Breast epithelium (tissue), 4 donors: ENCODE measurements at regions of chr5 and their contacts with region 1.

Region 1: GRCh38 chr5:156675395-156675794 is 174.7 kb upstream of the PPP1R2B start:
- DNase-seq: no peak
- H3K4me3 ChIP-seq: no peak overlapping the region
- H3K27ac ChIP-seq: no peak overlapping the region
- H3K4me1 ChIP-seq: no peaks in the 10 kb centered on the region
- H3K27me3 ChIP-seq: no peaks in the 10 kb centered on the region
- CTCF ChIP-seq: no peak
- POLR2A ChIP-seq: no peak

Region 2: DNA sequence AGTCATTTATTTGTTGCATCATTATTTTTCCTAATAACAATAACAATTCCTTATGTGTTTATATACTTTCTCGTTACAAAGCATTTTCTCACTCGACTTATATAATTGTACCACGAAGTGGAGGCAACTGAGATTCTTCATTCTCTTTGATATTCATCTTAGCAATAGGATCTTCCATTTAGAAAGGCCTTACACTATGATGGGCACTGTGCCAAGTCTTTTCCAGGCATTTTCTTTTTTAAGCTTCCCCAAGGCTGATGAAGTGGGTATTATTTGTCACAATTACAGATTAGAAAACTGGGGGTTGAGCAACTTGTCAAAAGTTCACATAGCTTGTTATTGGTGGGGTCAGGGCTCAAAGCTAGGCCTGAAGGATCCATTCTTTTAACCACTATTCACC is 1386.1 kb before region 1 on chr5:
- intact Hi-C with region 1: loop called (anchors 5 kb)
- DNase-seq: no peak
- H3K4me3 ChIP-seq: no peak overlapping the region
- H3K27ac ChIP-seq: no peak overlapping the region
- H3K4me1 ChIP-seq: no peaks in the 10 kb centered on the region
- H3K27me3 ChIP-seq: no peaks in the 10 kb centered on the region
- CTCF ChIP-seq: no peak
- POLR2A ChIP-seq: no peak